CD4-positive, alpha-beta T cell (primary cell): ENCODE measurements at regions of chr15 and their contacts with region 1.

Region 1: DNA sequence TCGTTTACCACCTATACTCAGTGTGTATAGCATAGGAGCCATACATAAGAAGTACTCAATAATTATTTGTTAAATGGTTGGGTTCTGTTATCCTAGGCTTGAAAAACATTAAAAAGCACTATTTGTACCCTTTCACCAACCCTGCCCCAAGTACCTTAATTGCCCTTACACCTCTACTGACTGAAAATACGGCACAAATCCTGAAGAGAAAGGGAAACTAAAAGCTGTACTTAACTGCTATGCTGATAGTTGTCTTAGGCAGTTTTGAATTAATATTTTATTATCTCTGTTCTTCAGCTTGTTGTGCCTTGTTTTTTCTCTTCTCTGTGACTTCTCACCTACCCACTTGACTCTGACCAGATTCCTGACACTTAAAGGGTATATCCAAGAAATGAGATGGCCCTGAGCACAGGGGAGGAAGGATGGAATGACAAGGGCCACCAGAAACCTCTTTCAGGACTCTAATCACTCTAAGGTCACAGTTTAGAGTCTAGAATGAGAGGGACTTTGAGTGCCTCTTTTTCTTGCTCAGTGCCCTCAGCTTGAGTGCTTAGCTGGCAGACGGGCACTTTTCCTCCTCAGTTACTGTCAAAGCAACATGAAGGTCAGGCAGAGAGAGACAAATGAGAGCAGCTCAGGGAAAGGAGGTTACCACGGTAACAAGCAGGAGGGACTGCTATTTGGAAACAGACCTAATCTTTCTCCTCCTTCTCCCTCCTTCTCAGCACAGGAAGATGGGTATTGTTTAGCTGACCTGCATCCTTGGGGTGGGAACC is 136.5 kb downstream of the ZNF609 start:
- DNase-seq: peak in 9 of 14 experiments; percentile 2 to 71 (median 23)
- ATAC-seq: peak; percentile 77
- H3K4me3 ChIP-seq: peak overlapping the region; percentile 37
- H3K4me3 Mint-ChIP-seq: peak overlapping the region; percentile 88
- H3K27ac ChIP-seq: peak overlapping the region; percentile 65 to 72
- H3K27ac Mint-ChIP-seq: peak overlapping the region; percentile 92
- H3K4me1 ChIP-seq: peaks cover 33% of the 10 kb centered on the region
- H3K4me1 Mint-ChIP-seq: peaks cover 68% of the 10 kb centered on the region
- H3K27me3 ChIP-seq: no peaks in the 10 kb centered on the region
- H3K27me3 Mint-ChIP-seq: no peaks in the 10 kb centered on the region
- CTCF ChIP-seq: no peak

Region 2: DNA sequence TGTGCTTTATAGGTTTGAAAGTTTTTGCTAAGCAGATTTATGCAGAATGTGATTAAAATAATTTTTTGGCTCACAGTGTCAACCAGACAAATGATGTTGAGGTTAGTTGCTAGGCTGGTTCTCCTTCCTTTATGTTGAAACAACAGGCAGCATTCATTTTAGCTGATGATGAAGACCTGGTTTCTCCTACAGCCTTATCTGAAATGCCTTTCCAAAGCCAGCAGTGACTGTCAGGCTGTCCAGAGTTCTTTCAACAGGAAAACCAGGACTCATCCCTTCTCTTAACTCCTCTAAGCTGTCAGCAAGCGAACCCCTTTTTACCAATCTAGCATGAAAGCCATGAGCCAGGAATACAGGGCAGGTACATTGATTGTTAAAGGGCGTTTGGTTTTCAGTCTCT is 52.4 kb before region 1 on chr15:
- CTCF ChIA-PET with region 1: no interaction called
- POLR2A ChIA-PET with region 1: no interaction called
- intact Hi-C with region 1: no loop called
- DNase-seq: no peak
- ATAC-seq: no peak
- H3K4me3 ChIP-seq: no peak overlapping the region
- H3K4me3 Mint-ChIP-seq: peak overlapping the region; percentile 25
- H3K27ac ChIP-seq: no peak overlapping the region
- H3K27ac Mint-ChIP-seq: peak overlapping the region; percentile 66
- H3K4me1 ChIP-seq: peaks cover 3% of the 10 kb centered on the region
- H3K4me1 Mint-ChIP-seq: peaks cover 70% of the 10 kb centered on the region
- H3K27me3 ChIP-seq: no peaks in the 10 kb centered on the region
- H3K27me3 Mint-ChIP-seq: no peaks in the 10 kb centered on the region
- CTCF ChIP-seq: no peak

Region 3: GRCh38 chr15:64582202-64582601 is 14.7 kb before region 1 on chr15:
- CTCF ChIA-PET with region 1: no interaction called
- POLR2A ChIA-PET with region 1: interaction called, 10 read pairs
- intact Hi-C with region 1: no loop called
- DNase-seq: no peak
- ATAC-seq: no peak
- H3K4me3 ChIP-seq: no peak overlapping the region
- H3K4me3 Mint-ChIP-seq: no peak overlapping the region
- H3K27ac ChIP-seq: no peak overlapping the region
- H3K27ac Mint-ChIP-seq: peak overlapping the region; percentile 31
- H3K4me1 ChIP-seq: peaks cover 33% of the 10 kb centered on the region
- H3K4me1 Mint-ChIP-seq: peaks cover 58% of the 10 kb centered on the region
- H3K27me3 ChIP-seq: no peaks in the 10 kb centered on the region
- H3K27me3 Mint-ChIP-seq: no peaks in the 10 kb centered on the region
- CTCF ChIP-seq: no peak

Region 4: DNA sequence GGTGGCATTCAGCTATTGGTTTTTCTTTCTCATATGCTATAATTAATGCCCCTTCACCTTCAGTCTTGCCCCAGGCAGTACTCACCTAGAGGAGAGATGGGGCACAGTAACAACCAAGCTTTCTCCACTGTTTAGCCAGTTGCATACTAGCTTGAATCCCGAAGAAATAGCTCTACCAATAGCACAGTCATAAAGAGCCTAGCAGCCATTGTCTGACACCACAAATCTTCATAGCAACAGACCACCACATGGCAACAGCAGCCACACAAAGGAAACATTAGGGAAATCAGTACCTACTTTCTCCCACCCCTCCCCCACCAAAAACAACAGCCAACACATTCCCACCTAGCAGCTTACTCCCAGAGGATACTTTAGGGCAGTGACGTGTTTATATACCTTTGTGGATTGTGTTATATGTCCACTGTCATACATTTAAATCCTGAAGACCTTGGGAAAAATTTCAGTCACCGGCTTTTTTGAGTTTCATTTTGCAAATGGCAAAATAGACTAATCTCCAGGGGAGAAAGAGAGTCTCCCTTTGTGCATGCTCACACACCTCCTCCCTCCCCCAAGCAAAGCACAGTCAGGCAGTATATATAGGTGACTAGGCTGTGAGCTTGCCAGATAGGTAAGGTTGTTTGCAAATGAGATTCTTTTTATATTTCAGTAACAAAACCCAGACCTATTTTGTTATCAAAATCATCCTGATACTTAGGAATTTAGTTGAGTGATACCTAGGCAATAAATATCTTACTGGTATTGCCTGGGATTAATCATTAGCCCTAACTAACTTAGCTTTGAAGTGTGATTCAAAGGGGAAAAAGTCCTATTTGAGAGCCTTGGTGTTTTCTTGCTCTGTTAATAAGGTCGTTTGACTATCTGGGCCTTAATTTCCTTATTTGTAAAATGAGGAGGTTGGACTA is 37.9 kb after region 1 on chr15:
- CTCF ChIA-PET with region 1: no interaction called
- POLR2A ChIA-PET with region 1: interaction called, 3 read pairs
- intact Hi-C with region 1: loop called in 1 of 2 experiments (anchors 5 kb)
- DNase-seq: peak in 5 of 14 experiments; percentile 10 to 57 (median 42)
- ATAC-seq: peak; percentile 57
- H3K4me3 ChIP-seq: peak overlapping the region; percentile 22
- H3K4me3 Mint-ChIP-seq: peak overlapping the region; percentile 62
- H3K27ac ChIP-seq: peak overlapping the region in 1 of 2 donors; percentile 51
- H3K27ac Mint-ChIP-seq: peak overlapping the region; percentile 80
- H3K4me1 ChIP-seq: peaks cover 71% of the 10 kb centered on the region
- H3K4me1 Mint-ChIP-seq: peaks cover 82% of the 10 kb centered on the region
- H3K27me3 ChIP-seq: no peaks in the 10 kb centered on the region
- H3K27me3 Mint-ChIP-seq: no peaks in the 10 kb centered on the region
- CTCF ChIP-seq: no peak